A549 (cell line): ENCODE measurements at regions of chr4 and their contacts with region 1.

Region 1: DNA sequence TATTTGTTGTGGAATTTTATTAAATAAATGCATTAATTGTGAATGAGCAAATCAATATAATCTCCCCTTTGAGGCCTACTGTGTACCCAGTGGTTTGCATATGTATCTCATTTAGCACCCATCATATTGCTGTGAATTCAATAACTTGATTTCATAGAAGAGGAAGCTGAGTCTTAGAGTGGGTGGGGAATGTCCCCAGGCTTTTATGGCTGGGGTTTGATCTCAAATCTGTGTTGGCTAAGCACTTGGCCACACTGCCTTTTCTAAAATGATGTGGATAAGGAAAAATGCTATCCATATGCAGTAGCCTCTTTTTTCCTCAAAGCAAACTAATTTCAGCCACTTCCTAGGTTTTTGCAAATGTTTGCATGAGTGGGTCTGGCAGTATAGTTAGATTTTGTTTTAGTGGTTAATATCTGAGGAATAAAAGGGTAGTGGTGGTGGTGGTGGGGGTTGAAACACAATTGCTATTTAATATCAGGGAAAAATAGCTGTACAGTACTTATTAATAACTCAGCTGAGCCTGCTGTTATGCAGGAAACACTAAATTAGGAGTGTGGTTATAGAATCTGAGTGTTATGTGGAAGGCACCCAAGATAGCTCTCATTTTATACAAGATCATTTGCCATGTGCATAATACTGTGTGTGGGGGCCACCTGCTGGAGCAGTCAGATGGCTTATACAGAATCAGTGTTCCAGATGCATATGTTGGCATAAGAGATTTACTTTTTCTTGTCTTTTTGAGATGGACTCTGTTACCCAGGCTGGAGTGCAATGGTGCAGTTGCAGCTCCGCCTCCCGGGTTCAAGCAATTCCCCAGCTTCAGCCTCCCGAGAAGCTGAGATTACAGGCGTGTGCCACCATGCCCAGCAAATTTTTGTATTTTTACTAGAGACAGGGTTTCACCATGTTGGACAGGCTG is 108.0 kb downstream of the TMEM131L start:
- DNase-seq: peak; percentile 4 to 51
- ATAC-seq: peak; percentile 89 to 90
- H3K4me3 ChIP-seq: no peak overlapping the region
- H3K27ac ChIP-seq: no peak overlapping the region
- H3K4me1 ChIP-seq: 0 out of 3 replicates have a peak, but pooled peaks cover 3% of the 10 kb centered on the region
- CTCF ChIP-seq: peak; percentile 48
- EP300 ChIP-seq: no peak
- POLR2A ChIP-seq: no peak
- RAD21 ChIP-seq: peak; percentile 70 to 77

Region 2: DNA sequence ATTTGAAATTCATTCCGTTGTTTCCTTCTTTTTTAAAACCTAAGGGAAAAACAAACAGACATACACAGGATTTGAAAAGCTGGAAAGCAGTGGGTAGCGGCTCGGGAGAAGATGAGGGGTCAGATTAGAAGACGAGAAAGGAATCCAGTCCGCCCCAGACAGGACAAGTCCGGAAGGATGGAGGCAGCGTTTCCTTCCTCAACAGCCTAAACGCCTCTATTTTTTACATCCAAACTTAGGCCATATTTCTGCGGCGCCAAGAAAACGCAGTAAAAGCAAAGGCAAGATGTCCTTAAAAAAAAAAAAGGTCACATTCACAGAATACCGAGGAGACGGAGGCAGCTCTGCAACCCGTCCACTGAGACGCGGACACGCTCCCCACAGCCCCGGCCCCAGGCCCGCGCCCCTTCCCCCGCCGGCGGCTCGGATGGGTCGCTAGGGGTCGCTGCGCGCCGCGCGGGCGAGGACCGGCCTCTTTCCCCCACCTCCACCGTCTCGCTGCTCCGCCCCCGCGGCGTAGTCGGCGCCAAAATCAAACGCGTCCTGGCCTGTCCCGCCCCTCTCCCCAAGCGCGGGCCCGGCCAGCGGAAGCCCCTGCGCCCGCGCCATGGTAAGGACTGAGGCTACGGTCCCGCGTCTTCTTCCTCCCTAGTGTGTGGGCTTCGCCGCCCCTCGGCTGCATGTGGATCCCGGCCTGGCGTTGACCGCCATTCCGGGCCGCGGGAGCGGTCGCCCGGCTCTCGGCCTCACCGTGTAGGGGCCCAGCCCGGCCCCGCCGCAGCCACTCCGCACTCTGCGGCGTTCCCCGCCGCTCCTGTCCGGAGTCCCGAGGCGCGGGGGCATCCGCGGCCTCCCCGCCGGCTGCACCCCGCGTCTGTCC is 229.8 kb before region 1 on chr4 and contains the start of gene MND1:
- CTCF ChIA-PET with region 1: interaction called, 16 read pairs
- POLR2A ChIA-PET with region 1: interaction called, 4 read pairs
- DNase-seq: peak; percentile 66 to 80
- ATAC-seq: peak; percentile 90 to 96
- H3K4me3 ChIP-seq: peak within 1 kb of the TSS; percentile 96
- H3K27ac ChIP-seq: peak within 1 kb of the TSS; percentile 86 to 94
- H3K4me1 ChIP-seq: peaks cover 19% of the 10 kb centered on the region; the same call in 2 of the 3 replicates
- CTCF ChIP-seq: peak; percentile 84
- EP300 ChIP-seq: no peak
- POLR2A ChIP-seq: peak; percentile 48
- RAD21 ChIP-seq: peak; percentile 64 to 92
- polyA plus RNA-seq, gene MND1: 8.3 and 16.6 TPM in 2 replicates

Region 3: DNA sequence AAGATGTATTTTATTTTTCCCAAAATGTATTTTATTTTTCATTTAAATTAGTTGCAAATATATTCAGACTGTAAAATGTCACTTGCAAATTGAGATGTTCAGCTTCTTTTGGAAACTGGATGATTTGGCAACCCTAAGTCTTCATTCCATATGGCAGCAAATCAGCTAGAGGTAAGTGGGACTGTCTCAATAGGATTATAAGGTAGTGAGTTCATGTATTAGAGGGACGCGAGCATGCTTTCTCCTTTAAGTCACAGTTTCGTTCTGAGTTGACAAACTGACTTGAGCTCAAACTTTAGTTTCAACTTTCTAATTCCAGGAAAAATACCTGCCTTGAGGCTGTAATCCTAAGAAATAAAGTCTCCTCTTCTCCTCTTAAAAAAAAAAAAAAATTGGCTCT is 152.2 kb before region 1 on chr4:
- CTCF ChIA-PET with region 1: no interaction called
- POLR2A ChIA-PET with region 1: no interaction called
- DNase-seq: no peak
- ATAC-seq: no peak
- H3K4me3 ChIP-seq: no peak overlapping the region
- H3K27ac ChIP-seq: no peak overlapping the region
- H3K4me1 ChIP-seq: no peaks in the 10 kb centered on the region
- CTCF ChIP-seq: no peak
- EP300 ChIP-seq: no peak
- POLR2A ChIP-seq: no peak
- RAD21 ChIP-seq: no peak

Region 4: DNA sequence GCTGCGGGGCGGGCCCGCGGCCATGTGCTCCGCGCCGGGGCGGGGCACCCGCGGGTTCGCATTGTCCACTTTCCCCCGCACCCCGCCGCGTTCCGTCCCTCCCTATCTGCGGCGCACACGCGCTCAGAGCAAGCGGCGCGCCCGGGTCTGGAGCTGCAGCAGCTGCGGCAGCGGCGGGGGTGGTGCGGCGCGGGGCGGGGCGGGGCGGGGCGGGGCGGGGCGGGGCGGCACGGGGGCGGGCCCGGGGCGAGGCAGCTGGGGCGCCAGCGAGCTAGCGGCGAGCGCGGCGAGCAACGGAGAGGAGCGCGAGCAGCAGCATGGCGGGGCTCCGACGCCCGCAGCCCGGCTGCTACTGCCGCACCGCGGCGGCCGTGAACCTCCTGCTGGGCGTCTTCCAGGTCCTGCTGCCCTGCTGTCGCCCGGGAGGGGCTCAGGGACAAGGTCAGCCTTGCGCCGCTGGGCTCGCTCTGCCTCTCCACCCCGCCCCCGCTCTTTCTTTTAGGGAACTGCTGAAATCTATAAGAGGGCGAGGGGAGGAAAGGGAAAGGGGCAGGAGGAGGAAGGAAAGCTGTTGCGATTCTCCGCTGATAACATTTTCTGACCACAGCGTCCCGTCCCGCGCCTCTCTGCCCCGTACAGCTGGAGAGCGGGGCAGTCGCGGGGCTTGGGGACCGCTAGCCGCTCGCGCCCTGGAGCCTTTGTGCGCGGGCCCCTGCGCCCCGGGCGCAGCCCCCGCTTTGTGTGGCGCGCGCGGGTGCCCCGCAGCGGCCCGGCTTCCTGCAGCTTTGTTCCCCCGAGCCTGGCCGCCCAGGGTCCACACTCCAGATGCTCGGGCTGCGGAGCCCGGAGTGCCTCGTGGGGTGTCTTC is 107.8 kb before region 1 on chr4 and contains the start of gene TMEM131L:
- CTCF ChIA-PET with region 1: interaction called, 14 read pairs
- POLR2A ChIA-PET with region 1: interaction called, 4 read pairs
- DNase-seq: peak; percentile 44 to 60
- ATAC-seq: peak; percentile 87 to 91
- H3K4me3 ChIP-seq: peak within 1 kb of the TSS; percentile 71
- H3K27ac ChIP-seq: peak within 1 kb of the TSS; percentile 82 to 96
- H3K4me1 ChIP-seq: peaks cover 14% of the 10 kb centered on the region; the same call in 2 of the 3 replicates
- CTCF ChIP-seq: no peak
- EP300 ChIP-seq: no peak
- POLR2A ChIP-seq: peak; percentile 64
- RAD21 ChIP-seq: no peak; a peak in 1 of 5 replicates
- polyA plus RNA-seq, gene TMEM131L: 5.0 and 6.3 TPM in 2 replicates